Activated CD8-positive, alpha-beta T cell treated with anti-CD3 and anti-CD28 coated beads for 36 hours (primary cell): ENCODE measurements at regions of chr9 and their contacts with region 1.

Region 1: GRCh38 chr9:20622330-20623020 is at the start of gene MLLT3:
- DNase-seq: peak; percentile 97
- ATAC-seq: peak; percentile 87
- H3K4me3 Mint-ChIP-seq: peak within 1 kb of the TSS; percentile 97
- H3K27ac Mint-ChIP-seq: peak within 1 kb of the TSS; percentile 99
- H3K4me1 Mint-ChIP-seq: peaks cover 37% of the 10 kb centered on the region
- H3K27me3 Mint-ChIP-seq: no peaks in the 10 kb centered on the region
- CTCF ChIP-seq: no peak
- total RNA-seq, gene MLLT3: 59.1 to 60.8 TPM

Region 2: DNA sequence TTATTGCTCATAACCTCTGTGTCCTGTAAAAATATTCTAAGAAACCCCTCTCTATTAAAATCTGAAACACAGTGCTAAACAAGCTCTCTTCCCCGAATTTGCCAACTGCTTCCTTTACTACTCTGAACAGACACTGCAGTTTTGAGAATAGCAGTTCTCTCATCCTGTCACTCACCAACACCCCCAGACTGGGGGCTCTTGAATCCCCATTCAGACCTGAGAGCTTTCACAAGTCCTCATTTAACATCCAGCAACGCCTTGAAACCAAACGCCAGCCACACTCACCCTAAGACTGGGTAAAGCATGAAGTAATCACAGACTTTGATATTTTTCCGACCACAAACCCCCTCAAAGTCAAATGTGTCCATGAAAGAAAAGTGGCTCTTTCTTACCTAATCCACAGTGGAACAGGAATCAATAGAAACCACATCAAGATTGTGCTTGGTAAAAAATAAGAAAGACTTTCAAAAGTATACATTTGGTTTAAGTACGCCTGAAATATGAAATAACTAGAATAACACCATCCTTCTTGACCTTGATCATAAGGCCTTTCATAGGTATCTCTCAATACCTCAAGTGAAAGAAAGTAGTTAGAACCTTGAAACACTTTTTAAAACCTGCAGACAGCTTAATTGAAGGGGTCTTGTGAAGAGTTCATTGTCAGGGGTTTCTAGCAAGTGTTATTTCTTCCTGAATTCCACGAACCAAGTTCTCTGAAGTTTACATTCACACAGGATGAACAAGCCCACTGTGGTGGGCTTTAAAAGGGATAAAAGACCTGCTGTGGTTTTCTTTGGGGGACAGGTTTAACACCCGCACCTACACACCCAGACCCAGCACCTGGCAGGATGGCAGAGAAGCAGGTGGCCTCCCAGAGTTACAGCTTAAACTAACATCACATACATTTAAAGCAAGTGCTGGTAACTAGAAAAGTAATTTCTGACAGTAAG is 412.8 kb before region 1 on chr9:
- CTCF ChIA-PET with region 1: interaction called, 5 read pairs
- POLR2A ChIA-PET with region 1: interaction called, 10 read pairs
- intact Hi-C with region 1: loop called (anchors 2 kb)
- DNase-seq: peak; percentile 94
- ATAC-seq: peak; percentile 87
- H3K4me3 Mint-ChIP-seq: peak overlapping the region; percentile 24
- H3K27ac Mint-ChIP-seq: peak overlapping the region; percentile 93
- H3K4me1 Mint-ChIP-seq: peaks cover 40% of the 10 kb centered on the region
- H3K27me3 Mint-ChIP-seq: no peaks in the 10 kb centered on the region
- CTCF ChIP-seq: no peak

Region 3: GRCh38 chr9:20361656-20362570 is 260.6 kb before region 1 on chr9:
- CTCF ChIA-PET with region 1: interaction called, 14 read pairs
- POLR2A ChIA-PET with region 1: interaction called, 4 read pairs
- intact Hi-C with region 1: loop called (anchors 2 kb)
- DNase-seq: no peak
- ATAC-seq: peak; percentile 74
- H3K4me3 Mint-ChIP-seq: peak overlapping the region; percentile 9
- H3K27ac Mint-ChIP-seq: peak overlapping the region; percentile 75
- H3K4me1 Mint-ChIP-seq: peaks cover 59% of the 10 kb centered on the region
- H3K27me3 Mint-ChIP-seq: no peaks in the 10 kb centered on the region
- CTCF ChIP-seq: no peak

Region 4: DNA sequence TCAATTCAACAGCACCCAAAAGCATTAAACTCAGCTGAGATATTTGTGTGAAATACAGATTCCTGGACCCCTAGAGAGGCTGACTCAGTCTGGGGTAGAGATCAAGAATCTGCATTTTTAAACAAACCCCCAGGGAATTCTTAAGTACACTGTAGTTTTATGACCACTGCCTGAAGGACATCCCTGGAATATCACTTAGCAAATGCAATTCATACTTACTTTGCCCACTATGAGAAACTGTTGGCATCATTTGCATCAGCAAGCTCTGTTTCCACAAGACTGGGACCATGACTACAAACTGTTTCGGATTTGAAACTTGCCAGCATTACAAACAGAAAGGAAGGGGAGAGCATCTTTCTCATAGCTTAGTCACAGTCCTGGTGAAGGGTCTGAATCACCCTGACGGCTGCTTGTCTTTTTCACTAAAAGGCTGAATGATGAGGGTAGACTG is 63.9 kb before region 1 on chr9:
- CTCF ChIA-PET with region 1: interaction called, 4 read pairs
- POLR2A ChIA-PET with region 1: interaction called, 13 read pairs
- intact Hi-C with region 1: loop called (anchors 5 kb)
- DNase-seq: peak; percentile 57
- ATAC-seq: peak; percentile 87
- H3K4me3 Mint-ChIP-seq: peak overlapping the region; percentile 31
- H3K27ac Mint-ChIP-seq: peak overlapping the region; percentile 59
- H3K4me1 Mint-ChIP-seq: peaks cover 86% of the 10 kb centered on the region
- H3K27me3 Mint-ChIP-seq: no peaks in the 10 kb centered on the region
- CTCF ChIP-seq: no peak

Region 5: DNA sequence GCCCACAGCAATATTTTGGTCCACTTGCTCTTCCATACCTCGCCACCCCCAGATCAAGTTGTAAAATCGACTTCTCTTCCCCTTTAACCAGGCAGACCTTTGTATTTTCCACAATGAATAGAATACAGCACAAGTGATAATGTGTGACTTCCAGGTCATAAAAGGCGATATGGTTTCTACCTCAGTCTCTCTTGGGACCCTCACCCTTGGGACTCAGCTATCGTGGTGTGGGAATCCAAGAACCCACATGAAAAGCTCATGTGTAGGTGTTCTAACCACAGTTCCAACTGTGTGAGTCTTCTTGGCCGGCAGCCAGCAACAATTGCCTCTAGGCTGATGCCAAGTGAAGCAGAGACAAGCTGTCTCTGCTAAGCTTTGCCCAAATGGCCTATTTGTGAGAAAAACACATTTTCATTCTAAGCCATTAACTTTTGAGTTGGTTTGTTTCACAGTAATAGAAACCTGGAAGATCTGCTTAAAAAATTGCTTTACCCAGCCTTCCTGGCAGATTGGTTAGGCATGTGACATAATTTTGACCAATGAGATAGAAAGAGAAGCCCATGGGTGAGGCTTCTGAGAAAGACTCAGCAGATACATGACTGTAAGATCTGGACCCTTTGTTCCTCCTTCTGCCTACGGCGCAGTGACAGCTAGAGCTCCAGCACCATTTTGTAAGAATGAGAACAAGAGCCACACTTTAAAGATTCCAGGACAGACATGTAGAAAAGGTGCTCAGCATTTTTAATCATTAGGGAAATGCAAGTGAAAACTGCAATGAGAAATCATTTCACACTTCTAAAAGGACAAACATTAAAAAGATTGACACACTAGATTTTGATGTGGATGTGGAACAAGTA is 18.1 kb after region 1 on chr9:
- CTCF ChIA-PET with region 1: interaction called, 32 read pairs
- POLR2A ChIA-PET with region 1: interaction called, 4 read pairs
- intact Hi-C with region 1: no loop called
- DNase-seq: peak; percentile 87
- ATAC-seq: peak; percentile 97
- H3K4me3 Mint-ChIP-seq: peak overlapping the region; percentile 18
- H3K27ac Mint-ChIP-seq: peak overlapping the region; percentile 27
- H3K4me1 Mint-ChIP-seq: peaks cover 13% of the 10 kb centered on the region
- H3K27me3 Mint-ChIP-seq: peaks cover 2% of the 10 kb centered on the region
- CTCF ChIP-seq: no peak

Region 6: GRCh38 chr9:20771729-20772128 is 149.3 kb after region 1 on chr9:
- CTCF ChIA-PET with region 1: no interaction called
- POLR2A ChIA-PET with region 1: no interaction called
- intact Hi-C with region 1: no loop called
- DNase-seq: no peak
- ATAC-seq: no peak
- H3K4me3 Mint-ChIP-seq: no peak overlapping the region
- H3K27ac Mint-ChIP-seq: no peak overlapping the region
- H3K4me1 Mint-ChIP-seq: peaks cover 2% of the 10 kb centered on the region
- H3K27me3 Mint-ChIP-seq: no peaks in the 10 kb centered on the region
- CTCF ChIP-seq: no peak

Region 7: DNA sequence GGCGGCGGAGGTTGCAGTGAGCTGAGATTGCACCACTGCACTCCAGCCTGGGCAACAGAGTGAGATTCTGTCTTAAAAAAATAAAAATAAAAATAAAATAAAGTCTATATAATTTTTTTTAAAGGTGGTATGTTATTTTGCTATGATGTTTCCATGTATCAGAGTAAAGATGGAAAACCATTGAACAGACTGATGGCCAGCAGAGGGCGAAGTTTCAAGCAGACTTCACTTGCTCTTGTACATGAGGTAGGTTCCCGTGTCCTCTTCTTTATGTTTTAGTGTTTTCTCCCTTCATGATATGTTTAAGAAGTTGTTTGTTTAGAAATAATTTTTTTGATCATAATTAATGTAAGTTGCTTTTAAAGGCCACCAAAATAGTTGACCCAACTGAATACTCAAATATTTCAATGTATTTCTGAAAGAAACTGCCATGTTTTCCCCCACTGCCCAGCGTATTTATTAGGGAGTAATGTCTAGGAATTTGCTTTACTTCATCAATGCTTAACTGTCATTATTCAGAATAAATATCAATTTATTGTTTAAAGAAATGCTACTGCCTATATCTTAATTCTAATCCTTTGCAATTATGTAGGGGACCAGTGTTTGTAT is 262.6 kb after region 1 on chr9:
- CTCF ChIA-PET with region 1: interaction called, 17 read pairs
- POLR2A ChIA-PET with region 1: interaction called, 3 read pairs
- intact Hi-C with region 1: no loop called
- DNase-seq: peak; percentile 76
- ATAC-seq: peak; percentile 42
- H3K4me3 Mint-ChIP-seq: no peak overlapping the region
- H3K27ac Mint-ChIP-seq: no peak overlapping the region
- H3K4me1 Mint-ChIP-seq: no peaks in the 10 kb centered on the region
- H3K27me3 Mint-ChIP-seq: no peaks in the 10 kb centered on the region
- CTCF ChIP-seq: peak; percentile 63

Region 8: DNA sequence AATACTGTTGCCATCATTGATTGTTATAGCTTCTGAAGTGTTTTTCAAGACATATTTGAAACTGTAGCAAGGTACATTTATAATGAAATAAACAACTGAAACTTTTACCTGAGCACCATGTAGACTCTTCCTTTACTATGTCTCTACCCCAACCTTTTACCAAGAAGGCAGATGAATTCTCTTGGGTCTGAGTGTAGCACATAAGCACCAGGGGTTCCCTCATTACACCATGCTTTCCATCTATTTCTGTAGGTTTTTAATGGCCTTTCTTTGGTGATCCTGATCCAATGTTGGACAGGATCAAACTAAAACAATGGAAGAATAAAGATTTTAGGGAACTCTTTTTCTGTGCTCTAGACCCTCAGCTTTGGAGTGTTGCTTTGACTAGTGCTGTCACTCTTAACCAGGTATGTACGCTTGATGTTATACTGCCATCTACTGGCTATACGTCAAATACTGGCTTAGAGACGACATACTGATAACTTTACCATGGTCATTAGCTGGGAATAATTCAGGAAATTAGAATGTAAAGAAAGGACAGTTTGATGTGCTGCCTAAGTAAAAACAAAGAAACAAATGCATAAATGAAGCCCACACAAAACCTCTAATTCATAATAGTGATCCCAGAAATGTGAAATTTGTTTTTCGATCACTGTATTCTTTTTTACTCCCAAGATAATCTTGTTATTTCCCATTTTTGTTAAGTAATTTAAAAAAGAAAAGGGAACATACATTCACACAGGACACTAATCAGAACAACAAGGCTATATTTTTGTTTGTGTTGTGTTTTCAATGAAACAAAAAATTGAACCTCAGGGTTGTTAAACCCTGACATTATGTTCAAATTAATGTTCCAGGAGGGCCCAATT is 488.5 kb after region 1 on chr9:
- CTCF ChIA-PET with region 1: interaction called, 28 read pairs
- POLR2A ChIA-PET with region 1: no interaction called
- intact Hi-C with region 1: loop called (anchors 2 kb)
- DNase-seq: peak; percentile 18
- ATAC-seq: peak; percentile 87
- H3K4me3 Mint-ChIP-seq: no peak overlapping the region
- H3K27ac Mint-ChIP-seq: no peak overlapping the region
- H3K4me1 Mint-ChIP-seq: no peaks in the 10 kb centered on the region
- H3K27me3 Mint-ChIP-seq: no peaks in the 10 kb centered on the region
- CTCF ChIP-seq: peak; percentile 91